ENCODE measurements at regions of chr15 and their contacts with region 1.

Region 1: DNA sequence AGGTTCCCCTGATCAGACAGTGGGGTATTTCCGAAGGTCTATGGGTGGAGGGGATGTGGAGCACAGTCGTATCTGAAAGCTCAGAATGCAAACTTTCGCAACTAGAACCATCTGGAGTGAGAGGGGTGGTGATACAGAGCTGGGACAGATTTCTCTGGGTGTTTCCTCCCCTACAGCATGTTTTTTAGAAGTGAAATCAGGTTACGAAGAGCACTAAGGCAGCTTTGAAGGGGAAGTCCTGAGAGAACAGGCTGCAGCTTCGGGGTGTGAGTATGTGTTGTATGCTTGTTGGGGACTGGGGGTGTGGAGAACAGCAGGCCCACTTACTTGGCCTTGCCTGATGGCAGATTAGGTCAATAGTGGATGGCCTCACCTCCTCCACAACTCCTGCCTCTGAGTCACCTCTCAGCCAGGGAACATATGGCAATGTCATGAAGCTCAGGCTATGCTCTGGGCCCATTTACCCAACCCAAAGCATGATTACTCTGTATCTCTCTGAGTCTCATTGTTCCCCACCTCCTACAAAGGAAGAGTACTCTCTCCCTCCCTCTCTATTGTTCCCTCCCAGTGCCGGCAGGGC is 107.2 kb upstream of the RASGRP1 start:
- DNase-seq: peak in 6 of 9 experiments; percentile 39 to 91 (median 64)
- ATAC-seq: peak; percentile 61
- H3K4me3 ChIP-seq: peak overlapping the region in 1 of 2 experiments; percentile 3
- H3K4me3 Mint-ChIP-seq: peak overlapping the region; percentile 61
- H3K27ac ChIP-seq: peak overlapping the region; percentile 70 to 84
- H3K27ac Mint-ChIP-seq: peak overlapping the region; percentile 97
- H3K4me1 ChIP-seq: peaks cover 77% of the 10 kb centered on the region
- H3K4me1 Mint-ChIP-seq: peaks cover 77% of the 10 kb centered on the region
- H3K27me3 ChIP-seq: no peaks in the 10 kb centered on the region
- H3K27me3 Mint-ChIP-seq: no peaks in the 10 kb centered on the region
- CTCF ChIP-seq: no peak

Region 2: DNA sequence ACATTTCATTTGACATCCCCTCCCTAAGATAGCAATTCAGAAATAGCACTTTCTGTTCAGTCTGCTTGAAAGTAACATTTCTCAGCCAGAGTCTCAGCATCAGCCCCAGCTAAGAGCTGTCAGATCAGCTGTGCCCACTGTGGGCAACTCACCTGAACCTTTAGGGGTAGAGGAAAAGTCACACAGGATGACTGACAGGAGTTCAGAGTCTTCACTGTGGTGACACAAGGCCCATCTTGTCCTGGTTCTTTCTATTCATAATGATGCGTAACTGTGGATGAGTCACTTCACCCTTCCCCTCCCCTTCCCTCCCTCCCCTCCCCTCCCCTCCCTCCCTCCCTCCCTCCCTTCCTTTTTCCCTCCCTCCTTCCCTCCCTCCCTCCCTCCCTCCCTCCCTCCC is 11.0 kb before region 1 on chr15:
- CTCF ChIA-PET with region 1: interaction called, 103 read pairs
- POLR2A ChIA-PET with region 1: interaction called, 5 read pairs
- intact Hi-C with region 1: loop called in 1 of 2 experiments (anchors 1 kb)
- DNase-seq: peak in 4 of 9 experiments; percentile 35 to 60 (median 46)
- ATAC-seq: peak; percentile 74
- H3K4me3 ChIP-seq: no peak overlapping the region
- H3K4me3 Mint-ChIP-seq: peak overlapping the region; percentile 1
- H3K27ac ChIP-seq: peak overlapping the region in 1 of 2 experiments; percentile 32
- H3K27ac Mint-ChIP-seq: peak overlapping the region; percentile 43
- H3K4me1 ChIP-seq: peaks cover 45% of the 10 kb centered on the region
- H3K4me1 Mint-ChIP-seq: peaks cover 66% of the 10 kb centered on the region
- H3K27me3 ChIP-seq: no peaks in the 10 kb centered on the region
- H3K27me3 Mint-ChIP-seq: no peaks in the 10 kb centered on the region
- CTCF ChIP-seq: no peak